ENCODE measurements at regions of chr1 and their contacts with region 1.

Region 1: DNA sequence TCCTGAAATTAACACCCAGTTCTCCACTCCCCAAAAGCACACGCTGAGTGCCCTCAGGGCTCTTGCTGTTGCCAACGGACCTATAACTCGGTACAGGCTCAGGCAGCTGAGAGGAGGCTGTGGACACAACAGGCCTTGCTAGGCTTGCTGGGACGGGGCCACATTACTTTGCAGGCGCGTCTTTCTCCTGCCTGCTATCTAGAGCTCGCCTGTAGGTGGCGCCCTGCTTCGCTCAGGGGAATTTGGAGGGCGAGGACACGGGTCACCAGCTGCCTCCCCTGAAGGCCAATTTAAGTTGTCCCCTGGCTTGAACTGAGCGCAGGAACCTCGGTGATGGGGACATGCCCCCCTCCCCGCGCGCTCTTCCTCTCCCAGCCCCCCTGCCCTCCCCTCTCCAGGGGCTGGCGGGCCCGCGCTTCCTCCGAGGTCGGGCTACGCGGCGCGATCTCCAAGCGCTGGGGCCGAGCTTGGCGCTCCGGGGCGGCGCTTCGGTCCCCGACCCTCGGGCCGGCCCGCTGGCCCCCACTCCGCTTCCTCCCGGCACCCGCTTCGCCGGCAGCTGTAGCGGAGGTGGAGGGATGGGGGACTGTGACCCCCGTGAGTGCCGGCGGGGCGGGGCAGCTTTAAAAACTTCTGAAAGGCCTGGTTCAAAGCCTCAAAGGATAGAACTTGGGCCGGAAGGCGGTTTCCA is 32.4 kb upstream of the NFIA start:
- DNase-seq: no peak
- H3K4me3 ChIP-seq: peak overlapping the region; percentile 65
- CTCF ChIP-seq: peak; percentile 95

Region 2: DNA sequence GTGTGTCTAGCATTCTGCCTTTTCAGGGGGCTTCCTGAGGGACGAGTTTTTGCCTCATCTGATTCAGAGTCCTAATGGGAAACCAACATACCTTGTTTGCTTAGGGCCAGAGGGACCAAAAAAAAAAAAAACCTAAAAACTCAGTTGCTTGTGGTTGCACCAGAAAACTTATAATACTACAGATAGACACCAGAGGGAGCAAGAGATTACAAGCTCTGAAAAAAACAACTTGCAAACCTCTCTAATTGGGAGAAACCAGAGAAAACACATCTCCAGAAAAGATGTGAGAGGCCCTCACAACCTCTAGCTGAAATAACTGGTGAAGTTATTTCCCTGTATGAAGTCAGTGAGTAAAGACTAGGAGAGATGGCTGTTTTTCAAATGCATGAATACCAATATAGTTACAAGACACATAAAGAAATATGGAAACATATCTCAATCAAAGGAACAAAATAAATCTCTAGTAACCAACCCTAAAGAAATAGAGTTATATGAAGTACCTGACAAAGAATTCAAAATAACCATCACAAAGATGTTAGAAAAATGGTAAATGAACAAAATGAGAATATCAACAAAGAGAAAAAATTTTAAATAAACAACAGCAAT is 201.3 kb before region 1 on chr1:
- CTCF ChIA-PET with region 1: interaction called, 13 read pairs
- POLR2A ChIA-PET with region 1: no interaction called
- DNase-seq: no peak
- H3K4me3 ChIP-seq: no peak overlapping the region
- CTCF ChIP-seq: peak; percentile 1

Region 3: GRCh38 chr1:61007534-61008364 is 42.2 kb before region 1 on chr1:
- CTCF ChIA-PET with region 1: no interaction called
- POLR2A ChIA-PET with region 1: no interaction called
- DNase-seq: no peak
- H3K4me3 ChIP-seq: no peak overlapping the region
- CTCF ChIP-seq: no peak

Region 4: GRCh38 chr1:61077676-61078541 is 27.9 kb after region 1 on chr1:
- CTCF ChIA-PET with region 1: interaction called, 16 read pairs
- POLR2A ChIA-PET with region 1: no interaction called
- DNase-seq: peak; percentile 98
- H3K4me3 ChIP-seq: peak overlapping the region; percentile 67
- CTCF ChIP-seq: no peak

Region 5: GRCh38 chr1:61132176-61133001 is 82.4 kb after region 1 on chr1:
- CTCF ChIA-PET with region 1: no interaction called
- POLR2A ChIA-PET with region 1: no interaction called
- DNase-seq: no peak
- H3K4me3 ChIP-seq: no peak overlapping the region
- CTCF ChIP-seq: no peak

Region 6: DNA sequence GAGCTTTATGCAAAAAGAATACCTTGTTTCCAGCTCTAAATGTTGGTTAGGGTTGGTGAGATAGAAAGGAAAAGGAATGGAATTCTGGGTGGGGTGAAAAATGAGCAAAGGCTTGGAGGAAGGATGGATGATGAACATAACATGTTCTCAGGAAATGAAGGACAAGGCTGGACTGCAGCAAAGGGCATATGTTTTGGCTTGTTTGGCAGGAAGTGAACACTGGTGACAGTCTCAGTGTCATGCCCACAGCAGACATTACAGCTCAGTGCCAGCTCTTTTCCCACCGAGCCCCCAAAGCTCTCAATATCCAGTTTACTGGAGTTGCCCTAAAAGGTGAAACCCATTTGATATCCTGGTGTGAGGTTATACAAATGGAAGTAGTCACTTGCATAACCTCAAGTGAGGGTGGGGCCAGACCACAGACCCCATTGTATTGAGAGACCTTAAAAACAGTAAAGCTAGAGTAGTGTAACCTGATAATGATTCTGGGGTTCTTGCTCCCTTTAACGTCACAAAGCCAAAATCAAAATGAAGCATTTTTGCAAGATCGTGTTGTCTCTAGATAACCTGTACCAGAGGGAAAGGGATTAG is 302.9 kb after region 1 on chr1:
- CTCF ChIA-PET with region 1: interaction called, 18 read pairs
- POLR2A ChIA-PET with region 1: no interaction called
- DNase-seq: no peak
- H3K4me3 ChIP-seq: no peak overlapping the region
- CTCF ChIP-seq: no peak

Region 7: GRCh38 chr1:61459345-61459744 is 409.4 kb after region 1 on chr1:
- CTCF ChIA-PET with region 1: interaction called, 13 read pairs
- POLR2A ChIA-PET with region 1: no interaction called
- DNase-seq: no peak
- H3K4me3 ChIP-seq: no peak overlapping the region
- CTCF ChIP-seq: no peak

Measured in AG04449 (cell line).